CD4-positive, alpha-beta memory T cell (primary cell): ENCODE measurements at regions of chr10 and their contacts with region 1.

Region 1: GRCh38 chr10:97792141-97792721 is 20.4 kb upstream of the SFRP5 start:
- DNase-seq: peak; percentile 62 to 76 (median 65)
- H3K4me3 ChIP-seq: no peak overlapping the region
- H3K4me3 Mint-ChIP-seq: no peak overlapping the region
- H3K27ac ChIP-seq: no peak overlapping the region
- H3K27ac Mint-ChIP-seq: peak overlapping the region in 4 of 7 donors; percentile 42 to 52 (median 49)
- H3K4me1 ChIP-seq: peaks cover 31% of the 10 kb centered on the region
- H3K4me1 Mint-ChIP-seq: peaks cover 17 to 34% (median 23%) of the 10 kb centered on the region in 4 donors
- H3K27me3 ChIP-seq: no peaks in the 10 kb centered on the region
- H3K27me3 Mint-ChIP-seq: peaks cover 2% of the 10 kb centered on the region in 2 donors

Region 2: GRCh38 chr10:97759158-97759887 is 32.9 kb before region 1 on chr10:
- CTCF ChIA-PET with region 1: interaction called, 10 read pairs
- POLR2A ChIA-PET with region 1: interaction called, 3 read pairs
- intact Hi-C with region 1: no loop called
- DNase-seq: peak in 4 of 5 donors; percentile 18 to 37 (median 28)
- H3K4me3 ChIP-seq: no peak overlapping the region
- H3K4me3 Mint-ChIP-seq: no peak overlapping the region
- H3K27ac ChIP-seq: no peak overlapping the region
- H3K27ac Mint-ChIP-seq: no peak overlapping the region
- H3K4me1 ChIP-seq: no peaks in the 10 kb centered on the region
- H3K4me1 Mint-ChIP-seq: no peaks in the 10 kb centered on the region
- H3K27me3 ChIP-seq: no peaks in the 10 kb centered on the region
- H3K27me3 Mint-ChIP-seq: no peaks in the 10 kb centered on the region

Region 3: DNA sequence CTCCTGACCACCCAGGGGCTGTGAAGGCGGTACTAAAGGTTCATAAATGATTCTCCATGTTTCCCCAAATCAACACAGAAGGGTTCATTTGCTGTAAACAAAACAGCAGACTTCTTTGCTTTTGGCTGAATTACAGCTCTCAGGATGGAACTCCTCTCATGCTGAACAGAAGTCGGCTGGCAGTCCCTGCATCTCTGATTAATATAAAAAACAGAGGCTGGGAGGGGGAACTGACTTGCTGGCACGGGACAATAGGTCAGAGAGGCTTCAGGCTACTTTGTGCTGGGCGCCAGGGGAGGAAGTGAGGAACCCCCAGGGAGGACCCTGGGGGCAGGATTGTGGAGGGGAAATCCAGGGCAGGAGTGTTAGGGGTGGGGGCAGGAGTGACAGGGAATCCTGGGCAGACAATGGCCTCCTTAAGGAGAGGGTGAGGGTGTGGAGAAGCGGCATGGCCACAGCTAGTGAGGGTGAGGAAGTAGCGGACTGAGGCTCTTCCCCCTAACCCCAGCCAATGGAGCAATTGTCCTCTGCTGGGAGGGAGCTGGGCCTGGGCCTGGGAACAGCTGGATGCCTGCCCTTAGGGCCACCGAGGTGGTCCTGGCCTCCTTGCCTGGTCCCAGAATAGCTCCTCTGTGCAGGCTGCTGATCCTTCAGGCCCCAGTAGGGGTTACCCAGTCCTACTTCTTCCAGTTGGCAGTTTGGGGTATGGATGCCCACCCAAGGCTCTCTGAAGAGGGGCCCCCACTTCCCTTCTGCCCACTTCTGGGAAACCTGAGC is 11.2 kb before region 1 on chr10:
- CTCF ChIA-PET with region 1: interaction called, 43 read pairs
- POLR2A ChIA-PET with region 1: interaction called, 5 read pairs
- intact Hi-C with region 1: no loop called
- DNase-seq: no peak
- H3K4me3 ChIP-seq: no peak overlapping the region
- H3K4me3 Mint-ChIP-seq: peak overlapping the region in 1 of 8 donors; percentile 10
- H3K27ac ChIP-seq: no peak overlapping the region
- H3K27ac Mint-ChIP-seq: peak overlapping the region in 6 of 7 donors; percentile 54 to 93 (median 88)
- H3K4me1 ChIP-seq: peaks cover 30% of the 10 kb centered on the region
- H3K4me1 Mint-ChIP-seq: peaks cover 13 to 28% (median 21%) of the 10 kb centered on the region in 4 donors
- H3K27me3 ChIP-seq: no peaks in the 10 kb centered on the region
- H3K27me3 Mint-ChIP-seq: no peaks in the 10 kb centered on the region

Region 4: DNA sequence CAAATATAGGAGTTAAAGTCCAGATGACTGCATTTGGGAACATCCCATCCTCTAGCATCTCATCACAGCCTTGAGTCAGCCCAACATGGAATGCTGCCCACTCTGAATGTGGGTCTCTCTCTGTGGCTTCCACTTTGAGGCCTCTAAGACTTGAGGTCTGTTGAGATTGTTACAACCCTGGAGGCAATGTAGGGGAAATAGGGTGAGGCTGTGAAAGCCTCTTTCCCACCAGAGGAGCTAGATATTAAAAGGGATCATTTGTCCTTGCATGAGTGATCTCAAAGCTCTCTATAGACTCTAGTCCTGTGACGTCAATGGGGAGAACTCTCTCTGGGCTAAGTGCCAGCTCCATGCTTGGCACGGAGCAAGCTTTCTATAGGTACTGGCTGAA is 51.0 kb after region 1 on chr10:
- CTCF ChIA-PET with region 1: interaction called, 42 read pairs
- POLR2A ChIA-PET with region 1: no interaction called
- intact Hi-C with region 1: no loop called
- DNase-seq: no peak
- H3K4me3 ChIP-seq: no peak overlapping the region
- H3K4me3 Mint-ChIP-seq: no peak overlapping the region
- H3K27ac ChIP-seq: no peak overlapping the region
- H3K27ac Mint-ChIP-seq: no peak overlapping the region
- H3K4me1 ChIP-seq: no peaks in the 10 kb centered on the region
- H3K4me1 Mint-ChIP-seq: peaks cover 10 to 21% (median 16%) of the 10 kb centered on the region in 4 donors
- H3K27me3 ChIP-seq: no peaks in the 10 kb centered on the region
- H3K27me3 Mint-ChIP-seq: no peaks in the 10 kb centered on the region

Region 5: DNA sequence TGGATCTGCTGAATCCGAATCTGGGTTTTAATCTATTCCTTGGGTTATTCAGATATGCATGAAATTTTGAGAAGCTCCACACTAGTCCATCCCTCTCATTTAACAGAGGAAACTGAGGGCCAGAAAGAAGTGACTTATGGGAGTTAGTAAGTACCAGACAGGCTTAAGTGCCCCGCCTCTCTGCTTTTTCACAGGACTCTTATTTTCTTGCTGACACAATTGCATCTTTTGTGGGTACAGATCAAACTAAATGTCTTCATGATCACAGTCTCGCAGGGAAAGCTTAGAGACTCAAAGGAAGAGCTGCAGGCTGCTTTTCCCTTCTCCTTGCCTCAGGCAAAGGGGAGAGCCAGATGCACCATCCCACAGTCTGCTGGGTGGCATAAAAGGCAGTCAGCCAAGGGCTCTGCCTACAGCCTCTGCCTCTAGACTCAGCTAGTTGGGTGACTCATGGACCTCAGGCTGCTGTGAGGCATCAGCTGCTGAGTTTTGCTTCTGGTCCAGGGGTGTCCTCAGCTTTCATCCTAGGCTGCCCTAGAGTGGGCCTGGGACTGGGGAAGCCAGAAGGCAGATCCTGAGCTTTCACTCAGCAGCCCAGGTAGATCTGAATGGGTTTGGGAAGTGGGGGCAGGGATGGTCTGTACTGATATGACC is 69.0 kb after region 1 on chr10:
- CTCF ChIA-PET with region 1: interaction called, 392 read pairs
- POLR2A ChIA-PET with region 1: no interaction called
- intact Hi-C with region 1: no loop called
- DNase-seq: no peak
- H3K4me3 ChIP-seq: no peak overlapping the region
- H3K4me3 Mint-ChIP-seq: no peak overlapping the region
- H3K27ac ChIP-seq: no peak overlapping the region
- H3K27ac Mint-ChIP-seq: peak overlapping the region in 1 of 7 donors; percentile 41
- H3K4me1 ChIP-seq: peaks cover 12% of the 10 kb centered on the region
- H3K4me1 Mint-ChIP-seq: peaks cover 7 to 15% (median 10%) of the 10 kb centered on the region in 4 donors
- H3K27me3 ChIP-seq: no peaks in the 10 kb centered on the region
- H3K27me3 Mint-ChIP-seq: no peaks in the 10 kb centered on the region

Region 6: GRCh38 chr10:97875391-97875790 is 83.2 kb after region 1 on chr10:
- CTCF ChIA-PET with region 1: interaction called, 392 read pairs
- POLR2A ChIA-PET with region 1: interaction called, 26 read pairs
- intact Hi-C with region 1: no loop called
- DNase-seq: no peak
- H3K4me3 ChIP-seq: no peak overlapping the region
- H3K4me3 Mint-ChIP-seq: no peak overlapping the region
- H3K27ac ChIP-seq: no peak overlapping the region
- H3K27ac Mint-ChIP-seq: no peak overlapping the region
- H3K4me1 ChIP-seq: no peaks in the 10 kb centered on the region
- H3K4me1 Mint-ChIP-seq: no peaks in the 10 kb centered on the region
- H3K27me3 ChIP-seq: no peaks in the 10 kb centered on the region
- H3K27me3 Mint-ChIP-seq: peaks cover 1 to 3% of the 10 kb centered on the region in 2 donors